ENCODE measurements at regions of chr6 and their contacts with region 1.

Region 1: DNA sequence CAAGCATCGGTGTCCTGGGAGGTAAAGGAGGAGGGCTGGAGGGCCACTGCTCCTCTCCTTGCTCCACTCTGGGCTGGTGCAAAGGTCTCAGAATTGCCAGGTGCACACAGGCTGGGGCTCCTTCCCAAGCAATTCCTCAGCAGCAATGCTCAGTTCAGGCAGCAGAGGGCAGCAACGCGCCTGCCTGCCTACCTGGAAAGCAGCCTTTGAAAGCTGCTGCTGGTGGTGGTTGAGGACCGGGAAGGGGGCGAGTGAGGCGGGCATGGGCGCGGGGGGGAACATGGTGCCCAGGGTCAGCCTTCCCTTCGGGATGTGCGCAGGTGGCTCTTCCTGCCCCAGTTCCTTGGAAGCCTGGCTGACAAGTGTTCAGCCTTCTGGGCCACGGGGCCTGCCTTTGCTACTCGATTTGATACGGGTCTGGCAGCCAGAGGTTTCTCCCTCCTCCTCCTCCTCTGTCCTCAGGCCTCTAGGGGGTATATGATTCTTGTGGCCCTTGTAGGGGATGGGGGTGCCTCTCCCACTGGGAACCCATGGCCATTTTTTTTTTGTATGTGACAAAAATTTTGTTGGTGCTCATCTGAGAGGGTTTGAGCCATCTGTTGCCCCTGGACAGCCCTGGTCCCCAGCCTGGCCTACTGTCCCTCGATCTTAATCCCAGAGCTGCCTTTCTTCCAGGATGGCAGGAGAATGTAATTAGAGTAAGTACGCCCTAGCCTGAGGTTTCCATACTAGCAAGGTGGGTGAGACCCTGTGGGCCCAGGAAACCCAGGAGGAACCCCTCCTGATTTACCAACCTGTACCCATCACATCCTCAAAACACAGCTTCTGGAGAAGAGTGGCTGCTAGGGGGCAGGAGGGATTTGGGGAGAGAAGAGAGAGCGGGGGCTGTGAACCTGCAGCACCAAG is 20.1 kb downstream of the MRPS18A start:
- DNase-seq: no peak
- ATAC-seq: peak; percentile 84
- H3K4me3 ChIP-seq: no peak overlapping the region
- H3K27ac ChIP-seq: peak overlapping the region; percentile 69
- H3K4me1 ChIP-seq: peaks cover 38% of the 10 kb centered on the region
- H3K27me3 ChIP-seq: no peaks in the 10 kb centered on the region
- CTCF ChIP-seq: peak; percentile 95 to 99 (median 95)
- EP300 ChIP-seq: no peak
- POLR2A ChIP-seq: peak; percentile 70
- RAD21 ChIP-seq: peak; percentile 92

Region 2: DNA sequence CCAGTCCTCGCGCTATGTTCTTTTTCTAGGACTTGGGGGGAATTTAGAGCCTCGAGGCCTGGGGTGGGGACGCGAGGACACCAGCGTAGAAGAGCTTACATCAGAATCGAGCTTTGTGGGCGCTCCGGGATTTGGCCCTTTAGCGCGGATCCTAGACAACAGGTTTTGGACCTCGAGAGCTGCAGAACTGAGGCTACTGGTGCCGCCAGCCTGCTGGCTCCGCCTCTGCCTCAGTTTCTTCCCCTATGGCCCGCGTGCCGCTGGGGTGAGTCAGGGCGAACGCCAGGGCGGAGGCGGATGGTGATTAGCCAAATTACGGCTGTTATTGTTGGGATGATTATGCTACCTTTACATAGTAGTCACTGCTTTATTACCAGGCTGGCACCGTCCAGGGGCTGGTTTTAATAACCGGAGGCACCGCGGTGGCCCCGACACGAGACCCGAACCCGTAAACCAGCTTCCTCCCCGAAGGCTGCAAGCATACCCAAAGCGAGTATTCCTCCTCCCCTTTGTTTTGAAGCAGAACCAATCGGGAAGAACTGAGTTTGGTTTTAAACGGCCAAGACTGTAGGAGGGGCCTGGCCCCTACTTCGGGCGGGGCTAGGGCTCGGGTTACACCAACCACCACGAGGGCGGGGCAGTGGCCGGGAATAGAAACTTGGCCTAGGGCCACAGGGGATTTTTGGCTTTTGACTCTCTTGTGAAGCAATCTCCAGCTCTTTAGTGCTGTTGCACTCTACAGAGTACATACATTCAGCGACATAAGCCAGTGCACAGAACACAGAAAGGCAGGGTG is 37.8 kb before region 1 on chr6:
- CTCF ChIA-PET with region 1: interaction called, 16 read pairs
- POLR2A ChIA-PET with region 1: interaction called, 10 read pairs
- RAD21 ChIA-PET with region 1: interaction called, 4 read pairs
- SMC1A ChIA-PET with region 1: interaction called, 3 read pairs
- in situ Hi-C with region 1: no loop called
- intact Hi-C with region 1: no loop called
- DNase-seq: peak; percentile 96
- ATAC-seq: peak; percentile 86
- H3K4me3 ChIP-seq: peak overlapping the region; percentile 80
- H3K27ac ChIP-seq: peak overlapping the region; percentile 99
- H3K4me1 ChIP-seq: peaks cover 20% of the 10 kb centered on the region
- H3K27me3 ChIP-seq: no peaks in the 10 kb centered on the region
- CTCF ChIP-seq: no peak
- EP300 ChIP-seq: 0 out of 4 replicates have a peak, but pooled peaks have one; percentile 42 to 48
- POLR2A ChIP-seq: peak; percentile 83
- RAD21 ChIP-seq: no peak

Region 3: GRCh38 chr6:43714311-43715055 is 47.0 kb after region 1 on chr6:
- CTCF ChIA-PET with region 1: interaction called, 14 read pairs
- POLR2A ChIA-PET with region 1: interaction called, 6 read pairs
- RAD21 ChIA-PET with region 1: interaction called, 12 read pairs
- SMC1A ChIA-PET with region 1: interaction called, 6 read pairs
- in situ Hi-C with region 1: no loop called
- intact Hi-C with region 1: no loop called
- DNase-seq: no peak
- ATAC-seq: peak; percentile 54
- H3K4me3 ChIP-seq: peak overlapping the region; percentile 41
- H3K27ac ChIP-seq: peak overlapping the region; percentile 75
- H3K4me1 ChIP-seq: peaks cover 33% of the 10 kb centered on the region
- H3K27me3 ChIP-seq: no peaks in the 10 kb centered on the region
- CTCF ChIP-seq: no peak
- EP300 ChIP-seq: no peak
- POLR2A ChIP-seq: no peak
- RAD21 ChIP-seq: no peak

Region 4: GRCh38 chr6:43758617-43759050 is 91.1 kb after region 1 on chr6:
- CTCF ChIA-PET with region 1: interaction called, 28 read pairs
- POLR2A ChIA-PET with region 1: no interaction called
- RAD21 ChIA-PET with region 1: interaction called, 4 read pairs
- SMC1A ChIA-PET with region 1: interaction called, 8 read pairs
- in situ Hi-C with region 1: no loop called
- intact Hi-C with region 1: loop called (anchors 1 kb)
- DNase-seq: no peak
- ATAC-seq: peak; percentile 85
- H3K4me3 ChIP-seq: no peak overlapping the region
- H3K27ac ChIP-seq: no peak overlapping the region
- H3K4me1 ChIP-seq: peaks cover 10% of the 10 kb centered on the region
- H3K27me3 ChIP-seq: no peaks in the 10 kb centered on the region
- CTCF ChIP-seq: peak; percentile 67 to 88 (median 84)
- EP300 ChIP-seq: no peak
- POLR2A ChIP-seq: no peak
- RAD21 ChIP-seq: peak; percentile 62

Region 5: GRCh38 chr6:43878823-43879495 is 211.5 kb after region 1 on chr6:
- CTCF ChIA-PET with region 1: no interaction called
- POLR2A ChIA-PET with region 1: no interaction called
- RAD21 ChIA-PET with region 1: no interaction called
- SMC1A ChIA-PET with region 1: no interaction called
- in situ Hi-C with region 1: no loop called
- intact Hi-C with region 1: no loop called
- DNase-seq: no peak
- ATAC-seq: no peak
- H3K4me3 ChIP-seq: no peak overlapping the region
- H3K27ac ChIP-seq: no peak overlapping the region
- H3K4me1 ChIP-seq: peaks cover 5% of the 10 kb centered on the region
- H3K27me3 ChIP-seq: no peaks in the 10 kb centered on the region
- CTCF ChIP-seq: no peak
- EP300 ChIP-seq: no peak
- POLR2A ChIP-seq: no peak
- RAD21 ChIP-seq: no peak